ENCODE measurements at regions of chr1 and their contacts with region 1.

Region 1: DNA sequence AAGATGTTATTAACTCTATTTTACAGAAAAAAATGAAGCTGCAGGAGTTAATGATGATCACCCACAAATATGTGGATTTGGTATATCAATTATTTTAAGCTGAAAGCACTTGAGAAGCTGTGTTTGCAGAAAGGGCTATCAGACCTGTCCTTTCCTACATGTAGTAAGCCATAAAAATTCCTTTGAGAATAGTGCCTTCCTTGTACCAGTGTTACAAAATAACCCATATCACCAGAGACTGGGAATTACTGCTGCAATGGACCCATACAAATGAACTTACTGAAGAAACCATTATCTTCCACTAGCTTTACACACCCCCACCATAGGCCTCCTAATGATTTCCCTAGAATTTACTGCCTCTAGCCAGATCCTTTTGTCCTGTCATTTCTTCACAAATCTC is 99.2 kb upstream of the ZRANB2 start:
- DNase-seq: no peak
- H3K4me3 ChIP-seq: no peak overlapping the region
- H3K27ac ChIP-seq: no peak overlapping the region
- H3K4me1 ChIP-seq: no peaks in the 10 kb centered on the region
- H3K27me3 ChIP-seq: no peaks in the 10 kb centered on the region

Region 2: DNA sequence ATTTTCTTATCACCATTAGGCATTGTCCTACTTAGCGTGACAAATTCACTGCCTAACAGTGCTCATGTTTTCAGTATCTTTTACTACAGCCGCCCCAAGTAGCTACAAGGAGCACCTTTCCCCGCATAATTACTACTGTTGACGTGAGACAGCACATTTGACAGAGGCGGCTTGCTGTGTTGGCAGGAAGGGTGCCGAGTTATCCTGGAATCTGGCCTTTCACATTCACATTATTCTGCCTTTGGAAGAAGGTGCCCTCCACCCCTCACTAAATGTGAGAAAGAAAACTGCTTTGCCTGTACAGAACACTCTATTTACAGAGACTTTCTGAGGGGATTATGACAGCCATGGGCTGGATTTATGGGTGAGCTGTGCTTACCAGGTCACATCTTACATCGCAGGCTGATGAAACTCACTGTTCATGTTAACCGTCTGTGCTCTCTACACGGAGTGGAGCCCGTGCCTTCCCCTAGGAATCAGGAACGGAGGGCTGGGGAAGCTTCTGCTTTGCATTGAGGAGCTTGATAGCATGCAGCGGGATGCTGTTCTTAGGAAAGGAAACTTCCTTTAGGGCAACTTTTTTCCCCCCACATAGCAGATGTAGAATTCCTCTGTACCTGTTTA is 48.9 kb after region 1 on chr1:
- in situ Hi-C with region 1: loop called (anchors 5 kb)
- DNase-seq: peak; percentile 3
- H3K4me3 ChIP-seq: no peak overlapping the region
- H3K27ac ChIP-seq: no peak overlapping the region
- H3K4me1 ChIP-seq: peaks cover 8% of the 10 kb centered on the region
- H3K27me3 ChIP-seq: no peaks in the 10 kb centered on the region

Measured in GM23248 (cell line).